CD8-positive, alpha-beta T cell (primary cell): ENCODE measurements at regions of chr6 and their contacts with region 1.

Region 1: DNA sequence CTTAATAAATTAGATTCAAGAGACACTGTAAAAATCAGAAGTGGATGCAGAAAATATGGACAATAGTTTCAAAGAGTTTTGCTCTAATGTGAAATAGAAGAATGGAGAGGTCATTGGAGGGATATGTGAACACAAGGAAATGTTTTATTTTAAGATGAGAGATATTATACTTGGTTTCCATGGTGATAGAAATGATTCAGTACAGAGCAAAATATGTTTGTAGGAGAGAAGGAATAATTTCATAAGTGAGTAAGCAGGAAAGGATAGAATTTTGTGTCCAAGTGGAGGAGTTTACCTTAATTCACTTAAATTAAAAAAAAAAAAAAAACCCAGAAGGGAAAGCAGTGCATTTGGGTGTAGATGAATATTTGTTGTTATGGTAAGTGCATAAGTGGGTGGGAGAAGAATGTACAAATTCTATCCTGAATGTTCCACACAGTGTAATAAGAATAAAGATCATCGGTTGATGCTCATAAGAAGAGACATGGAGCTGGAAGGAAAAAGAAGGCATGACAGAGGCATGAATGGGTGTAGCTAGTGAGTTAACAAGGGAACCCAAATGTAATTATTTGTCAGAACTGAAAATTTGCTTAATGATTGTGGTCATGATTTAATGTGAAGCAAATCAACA is 689.0 kb upstream of the GJE1 start:
- DNase-seq: no peak
- ATAC-seq: no peak
- H3K4me3 ChIP-seq: no peak overlapping the region
- H3K4me3 Mint-ChIP-seq: no peak overlapping the region
- H3K27ac ChIP-seq: no peak overlapping the region
- H3K27ac Mint-ChIP-seq: no peak overlapping the region
- H3K4me1 ChIP-seq: no peaks in the 10 kb centered on the region
- H3K4me1 Mint-ChIP-seq: no peaks in the 10 kb centered on the region
- H3K27me3 ChIP-seq: no peaks in the 10 kb centered on the region
- H3K27me3 Mint-ChIP-seq: no peaks in the 10 kb centered on the region
- CTCF ChIP-seq: no peak

Region 2: DNA sequence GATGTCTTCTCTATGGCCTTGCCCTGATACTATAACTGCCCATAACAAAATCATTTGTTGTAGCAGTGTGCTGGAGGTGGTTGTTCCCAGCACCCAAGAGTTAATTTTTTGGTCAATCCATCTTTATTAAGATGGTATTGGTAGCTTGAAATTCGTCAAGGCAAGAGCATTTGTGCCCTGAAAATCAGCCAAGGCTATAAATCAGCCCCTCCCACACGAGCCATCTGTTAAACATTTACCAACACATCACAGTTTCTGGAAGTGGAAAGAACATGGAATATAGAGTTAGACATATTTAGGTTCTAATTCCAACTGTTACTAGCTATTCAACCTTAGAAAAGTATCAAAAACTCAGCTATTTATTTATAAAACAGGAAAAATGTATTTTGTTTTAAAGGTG is 199.4 kb before region 1 on chr6:
- CTCF ChIA-PET with region 1: no interaction called
- POLR2A ChIA-PET with region 1: no interaction called
- intact Hi-C with region 1: no loop called
- DNase-seq: no peak
- ATAC-seq: no peak
- H3K4me3 ChIP-seq: no peak overlapping the region
- H3K4me3 Mint-ChIP-seq: no peak overlapping the region
- H3K27ac ChIP-seq: no peak overlapping the region
- H3K27ac Mint-ChIP-seq: no peak overlapping the region
- H3K4me1 ChIP-seq: no peaks in the 10 kb centered on the region
- H3K4me1 Mint-ChIP-seq: no peaks in the 10 kb centered on the region
- H3K27me3 ChIP-seq: no peaks in the 10 kb centered on the region
- H3K27me3 Mint-ChIP-seq: no peaks in the 10 kb centered on the region
- CTCF ChIP-seq: no peak

Region 3: DNA sequence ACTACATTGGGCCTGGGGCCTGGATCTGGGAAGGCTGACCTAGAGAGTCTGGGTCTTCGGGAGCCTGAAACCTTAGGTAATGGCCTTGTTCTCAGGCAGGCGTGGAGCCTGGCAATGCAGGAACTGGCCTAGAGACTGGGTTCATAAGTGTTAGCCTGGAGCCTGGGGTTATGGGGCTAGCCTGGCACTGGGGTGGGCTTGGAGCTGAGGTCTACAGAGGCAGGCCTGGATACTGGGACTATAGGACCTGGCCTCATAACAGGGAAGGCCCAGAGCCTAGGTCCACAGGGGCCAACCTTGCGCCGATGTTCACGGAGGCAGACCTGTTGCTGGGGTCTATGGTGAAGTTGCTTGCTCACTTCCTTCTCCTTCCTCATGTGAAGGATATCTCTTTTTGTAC is 154.8 kb before region 1 on chr6:
- CTCF ChIA-PET with region 1: no interaction called
- POLR2A ChIA-PET with region 1: no interaction called
- intact Hi-C with region 1: no loop called
- DNase-seq: no peak
- ATAC-seq: no peak
- H3K4me3 ChIP-seq: no peak overlapping the region
- H3K4me3 Mint-ChIP-seq: no peak overlapping the region
- H3K27ac ChIP-seq: no peak overlapping the region
- H3K27ac Mint-ChIP-seq: no peak overlapping the region
- H3K4me1 ChIP-seq: no peaks in the 10 kb centered on the region
- H3K4me1 Mint-ChIP-seq: no peaks in the 10 kb centered on the region
- H3K27me3 ChIP-seq: no peaks in the 10 kb centered on the region
- H3K27me3 Mint-ChIP-seq: no peaks in the 10 kb centered on the region
- CTCF ChIP-seq: no peak

Region 4: DNA sequence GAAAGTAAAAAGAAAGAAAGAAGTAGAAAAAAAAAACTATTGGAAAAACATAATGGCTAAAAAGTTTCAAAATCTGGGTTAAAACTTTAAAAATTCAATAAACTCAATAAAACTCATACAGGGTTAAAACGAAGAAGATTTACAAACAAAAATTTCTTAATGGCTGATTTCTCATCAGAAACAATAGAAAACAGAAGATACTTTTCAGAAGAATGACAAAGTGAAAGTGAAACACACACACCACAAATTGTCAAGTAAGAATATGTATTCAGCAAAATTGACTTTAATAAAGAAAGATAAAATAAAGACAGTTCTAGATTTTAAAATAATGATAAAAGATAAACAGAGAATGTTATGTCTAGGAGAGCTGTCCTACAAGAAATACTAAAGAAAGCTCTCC is 70.1 kb after region 1 on chr6:
- CTCF ChIA-PET with region 1: no interaction called
- POLR2A ChIA-PET with region 1: no interaction called
- intact Hi-C with region 1: loop called in 1 of 2 experiments (anchors 5 kb)
- DNase-seq: peak in 1 of 9 experiments; percentile 22
- ATAC-seq: no peak
- H3K4me3 ChIP-seq: no peak overlapping the region
- H3K4me3 Mint-ChIP-seq: no peak overlapping the region
- H3K27ac ChIP-seq: no peak overlapping the region
- H3K27ac Mint-ChIP-seq: no peak overlapping the region
- H3K4me1 ChIP-seq: no peaks in the 10 kb centered on the region
- H3K4me1 Mint-ChIP-seq: peaks cover 9% of the 10 kb centered on the region
- H3K27me3 ChIP-seq: no peaks in the 10 kb centered on the region
- H3K27me3 Mint-ChIP-seq: no peaks in the 10 kb centered on the region
- CTCF ChIP-seq: no peak

Region 5: DNA sequence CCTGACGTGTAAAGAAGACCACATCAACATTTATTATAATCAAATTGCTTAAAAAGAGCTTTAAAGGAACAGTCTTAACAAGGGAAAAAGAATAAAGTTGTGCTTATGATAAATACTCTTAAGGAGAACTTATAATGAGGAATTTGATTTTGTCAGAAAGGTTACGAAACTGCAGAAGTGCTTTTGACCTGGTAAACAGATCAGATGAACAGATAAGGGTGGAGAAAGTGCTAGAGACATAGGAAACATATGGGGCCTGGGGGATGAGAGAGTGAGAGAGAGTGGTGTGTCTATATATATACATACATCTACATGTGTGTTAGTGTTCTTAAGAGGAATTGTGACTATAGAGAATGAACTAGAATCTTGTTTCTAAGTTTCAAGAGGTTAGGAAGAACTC is 502.7 kb after region 1 on chr6:
- CTCF ChIA-PET with region 1: no interaction called
- POLR2A ChIA-PET with region 1: no interaction called
- intact Hi-C with region 1: no loop called
- DNase-seq: no peak
- ATAC-seq: no peak
- H3K4me3 ChIP-seq: no peak overlapping the region
- H3K4me3 Mint-ChIP-seq: no peak overlapping the region
- H3K27ac ChIP-seq: no peak overlapping the region
- H3K27ac Mint-ChIP-seq: no peak overlapping the region
- H3K4me1 ChIP-seq: no peaks in the 10 kb centered on the region
- H3K4me1 Mint-ChIP-seq: no peaks in the 10 kb centered on the region
- H3K27me3 ChIP-seq: no peaks in the 10 kb centered on the region
- H3K27me3 Mint-ChIP-seq: no peaks in the 10 kb centered on the region
- CTCF ChIP-seq: no peak

Region 6: GRCh38 chr6:142566628-142567396 is 1123.0 kb after region 1 on chr6:
- CTCF ChIA-PET with region 1: no interaction called
- POLR2A ChIA-PET with region 1: no interaction called
- intact Hi-C with region 1: no loop called
- DNase-seq: peak; percentile 22 to 72 (median 58)
- ATAC-seq: peak; percentile 57
- H3K4me3 ChIP-seq: no peak overlapping the region
- H3K4me3 Mint-ChIP-seq: no peak overlapping the region
- H3K27ac ChIP-seq: no peak overlapping the region
- H3K27ac Mint-ChIP-seq: no peak overlapping the region
- H3K4me1 ChIP-seq: peaks cover 47% of the 10 kb centered on the region
- H3K4me1 Mint-ChIP-seq: peaks cover 61% of the 10 kb centered on the region
- H3K27me3 ChIP-seq: no peaks in the 10 kb centered on the region
- H3K27me3 Mint-ChIP-seq: no peaks in the 10 kb centered on the region
- CTCF ChIP-seq: peak; percentile 75